ENCODE measurements at regions of chr10 and their contacts with region 1.

Region 1: DNA sequence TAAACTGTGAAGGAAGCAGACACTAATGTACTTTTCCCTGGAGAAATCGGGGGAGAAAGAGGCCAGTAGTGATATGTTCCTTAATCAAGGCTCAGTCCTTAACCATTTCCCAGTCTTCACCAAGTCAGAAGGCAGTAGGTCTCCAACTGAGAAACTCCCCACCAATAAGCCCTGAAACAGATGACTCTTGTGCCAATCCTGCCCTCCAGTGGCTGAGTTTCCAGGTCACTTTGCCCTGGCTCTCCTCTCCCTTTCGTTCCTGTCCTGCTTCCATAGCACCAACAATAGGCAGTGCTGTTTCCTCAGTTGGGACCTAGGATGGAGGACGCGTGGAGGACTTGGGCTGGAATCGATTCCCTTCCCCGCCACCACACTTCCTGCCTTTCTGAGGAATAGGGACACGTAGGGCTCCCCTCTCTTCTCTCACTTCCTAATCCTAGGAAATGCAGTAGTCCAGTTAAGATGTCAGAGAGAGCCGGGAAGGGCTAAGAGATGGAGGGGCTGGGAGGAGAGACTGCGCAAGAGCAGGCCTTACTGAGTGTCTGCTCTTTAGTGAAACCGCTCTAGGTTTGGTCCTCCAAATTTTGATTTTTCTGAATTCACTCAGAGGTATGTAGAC is 23.4 kb downstream of the ATOH7 start:
- DNase-seq: peak; percentile 78 to 90
- ATAC-seq: peak; percentile 96 to 99
- H3K4me3 ChIP-seq: no peak overlapping the region
- H3K27ac ChIP-seq: peak overlapping the region; percentile 26 to 76; a peak in 5 of 6 replicates
- H3K4me1 ChIP-seq: peaks cover 11% of the 10 kb centered on the region; the same call in 2 of the 3 replicates
- CTCF ChIP-seq: peak; percentile 92
- EP300 ChIP-seq: no peak
- POLR2A ChIP-seq: no peak
- RAD21 ChIP-seq: peak; percentile 97 to 99

Region 2: GRCh38 chr10:68082872-68083271 is 125.7 kb before region 1 on chr10:
- CTCF ChIA-PET with region 1: interaction called, 68 read pairs
- POLR2A ChIA-PET with region 1: no interaction called
- DNase-seq: peak in 1 of 2 experiments; percentile 61
- ATAC-seq: peak; percentile 31 to 66; a peak in 2 of 6 replicates
- H3K4me3 ChIP-seq: no peak overlapping the region
- H3K27ac ChIP-seq: peak overlapping the region; percentile 92 to 93; a peak in 5 of 6 replicates
- H3K4me1 ChIP-seq: peaks cover 55% of the 10 kb centered on the region
- CTCF ChIP-seq: peak; percentile 88
- EP300 ChIP-seq: no peak
- POLR2A ChIP-seq: no peak
- RAD21 ChIP-seq: peak; percentile 91 to 94

Region 3: DNA sequence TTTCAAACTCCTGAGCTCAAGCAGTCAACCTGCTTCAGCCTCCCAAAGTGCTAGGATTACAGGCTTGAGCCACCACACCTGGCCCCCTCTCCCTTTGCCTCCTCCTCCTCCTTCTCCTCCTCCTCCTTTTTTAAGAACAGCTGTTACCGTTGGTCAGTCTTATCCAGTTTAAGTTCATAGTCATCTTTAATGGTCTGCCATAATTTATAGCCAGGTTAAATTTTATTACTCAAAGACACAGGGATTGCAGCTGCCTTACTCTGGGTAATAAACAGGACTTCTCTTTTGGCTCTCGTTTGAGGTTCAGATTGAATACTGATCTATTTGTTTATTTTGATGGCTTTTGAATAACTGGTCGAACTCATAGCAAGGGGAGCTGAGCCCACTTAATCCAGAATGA is 11.8 kb before region 1 on chr10:
- CTCF ChIA-PET with region 1: interaction called, 22 read pairs
- POLR2A ChIA-PET with region 1: no interaction called
- DNase-seq: no peak
- ATAC-seq: no peak
- H3K4me3 ChIP-seq: no peak overlapping the region
- H3K27ac ChIP-seq: no peak overlapping the region
- H3K4me1 ChIP-seq: no peaks in the 10 kb centered on the region
- CTCF ChIP-seq: no peak
- EP300 ChIP-seq: no peak
- POLR2A ChIP-seq: no peak
- RAD21 ChIP-seq: no peak

Region 4: GRCh38 chr10:68231106-68231816 is 22.7 kb after region 1 on chr10:
- CTCF ChIA-PET with region 1: interaction called, 63 read pairs
- POLR2A ChIA-PET with region 1: interaction called, 4 read pairs
- DNase-seq: peak; percentile 84 to 92
- ATAC-seq: peak; percentile 95 to 97
- H3K4me3 ChIP-seq: peak overlapping the region; percentile 51
- H3K27ac ChIP-seq: peak overlapping the region; percentile 81 to 96
- H3K4me1 ChIP-seq: peaks cover 11% of the 10 kb centered on the region
- CTCF ChIP-seq: peak; percentile 38
- EP300 ChIP-seq: no peak
- POLR2A ChIP-seq: peak; percentile 73
- RAD21 ChIP-seq: no peak

Region 5: GRCh38 chr10:68301790-68302502 is 93.4 kb after region 1 on chr10:
- CTCF ChIA-PET with region 1: interaction called, 72 read pairs
- POLR2A ChIA-PET with region 1: no interaction called
- DNase-seq: peak; percentile 53 to 72
- ATAC-seq: peak; percentile 82 to 88; a peak in 5 of 6 replicates
- H3K4me3 ChIP-seq: no peak overlapping the region
- H3K27ac ChIP-seq: no peak overlapping the region
- H3K4me1 ChIP-seq: peaks cover 31% of the 10 kb centered on the region
- CTCF ChIP-seq: peak; percentile 76
- EP300 ChIP-seq: no peak
- POLR2A ChIP-seq: no peak
- RAD21 ChIP-seq: peak; percentile 82 to 85

Region 6: GRCh38 chr10:68331455-68332258 is 123.1 kb after region 1 on chr10 and contains the start of gene HNRNPH3:
- CTCF ChIA-PET with region 1: interaction called, 4 read pairs
- POLR2A ChIA-PET with region 1: interaction called, 10 read pairs
- DNase-seq: peak; percentile 90 to 99
- ATAC-seq: peak; percentile 81 to 88
- H3K4me3 ChIP-seq: peak within 1 kb of the TSS; percentile 97
- H3K27ac ChIP-seq: peak within 1 kb of the TSS; percentile 99
- H3K4me1 ChIP-seq: peaks cover 48% of the 10 kb centered on the region
- CTCF ChIP-seq: no peak
- EP300 ChIP-seq: no peak
- POLR2A ChIP-seq: peak; percentile 97
- RAD21 ChIP-seq: no peak; a peak in 1 of 5 replicates
- polyA plus RNA-seq, gene HNRNPH3: 108 and 210 TPM in 2 replicates

Measured in A549 (cell line).